PC-3 (cell line): ENCODE measurements at regions of chr3 and their contacts with region 1.

Region 1: GRCh38 chr3:10010486-10011465 is 15.5 kb upstream of the FANCD2 start:
- DNase-seq: peak; percentile 96
- ATAC-seq: peak; percentile 83
- H3K4me3 ChIP-seq: peak overlapping the region; percentile 90
- H3K27ac ChIP-seq: no peak overlapping the region
- H3K4me1 ChIP-seq: peaks cover 28% of the 10 kb centered on the region
- H3K27me3 ChIP-seq: no peaks in the 10 kb centered on the region
- CTCF ChIP-seq: no peak

Region 2: DNA sequence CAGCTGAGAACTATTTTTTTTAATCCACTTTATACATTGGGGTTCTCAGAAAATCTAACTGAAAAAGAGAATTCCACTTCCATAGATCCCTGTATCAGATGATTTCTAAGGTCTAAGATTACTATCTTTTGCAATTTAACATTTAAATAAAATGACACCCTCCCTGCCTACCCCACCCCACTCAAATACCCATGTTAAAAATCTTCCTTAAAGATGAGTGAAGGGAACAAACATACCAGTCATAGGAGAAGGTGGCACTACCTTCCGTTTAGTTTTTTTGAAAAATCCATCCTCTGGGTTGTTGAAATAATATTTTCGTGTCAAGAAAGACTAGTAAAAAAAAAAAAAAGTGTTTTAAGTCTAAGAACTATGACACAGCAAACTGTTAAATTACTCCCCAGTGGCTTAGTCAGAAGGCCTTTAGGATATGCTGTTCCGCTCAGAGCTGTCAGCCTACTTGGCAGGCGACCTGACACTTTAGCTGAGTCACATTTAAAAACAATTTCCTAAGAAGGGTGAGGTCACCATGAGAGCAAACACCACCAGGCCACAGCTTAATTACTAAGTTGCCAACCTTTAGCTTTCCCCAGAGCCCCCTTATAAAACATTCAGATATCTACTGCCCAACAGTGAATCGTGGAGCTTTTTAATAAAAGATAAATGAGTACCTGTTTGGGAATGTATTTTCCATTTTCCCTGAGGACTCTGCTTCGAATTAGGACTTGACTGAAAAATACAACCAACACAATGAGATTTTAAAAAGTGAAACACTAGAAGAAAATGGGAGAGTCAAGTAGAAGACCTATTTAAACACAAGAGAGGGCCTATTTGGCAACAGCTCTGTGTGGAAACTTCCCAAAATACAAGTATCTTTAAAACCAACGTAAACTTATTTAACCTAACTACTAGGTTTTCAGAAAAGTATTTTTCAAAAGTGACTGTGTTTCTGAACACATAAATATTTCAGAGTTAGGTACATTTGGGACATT is 33.8 kb before region 1 on chr3:
- CTCF ChIA-PET with region 1: no interaction called
- POLR2A ChIA-PET with region 1: interaction called, 3 read pairs
- intact Hi-C with region 1: loop called (anchors 5 kb)
- DNase-seq: peak; percentile 98
- ATAC-seq: peak; percentile 96
- H3K4me3 ChIP-seq: peak overlapping the region; percentile 36
- H3K27ac ChIP-seq: peak overlapping the region; percentile 93
- H3K4me1 ChIP-seq: peaks cover 20% of the 10 kb centered on the region
- H3K27me3 ChIP-seq: no peaks in the 10 kb centered on the region
- CTCF ChIP-seq: no peak